ENCODE measurements at regions of chr4 and their contacts with region 1.

Region 1: GRCh38 chr4:15882675-15883086 is 55.9 kb downstream of the FGFBP1 start:
- DNase-seq: peak; percentile 16
- H3K4me3 ChIP-seq: no peak overlapping the region
- H3K27me3 ChIP-seq: peaks cover 4% of the 10 kb centered on the region; the same call in 1 of the 2 replicates
- CTCF ChIP-seq: peak; percentile 90

Region 2: DNA sequence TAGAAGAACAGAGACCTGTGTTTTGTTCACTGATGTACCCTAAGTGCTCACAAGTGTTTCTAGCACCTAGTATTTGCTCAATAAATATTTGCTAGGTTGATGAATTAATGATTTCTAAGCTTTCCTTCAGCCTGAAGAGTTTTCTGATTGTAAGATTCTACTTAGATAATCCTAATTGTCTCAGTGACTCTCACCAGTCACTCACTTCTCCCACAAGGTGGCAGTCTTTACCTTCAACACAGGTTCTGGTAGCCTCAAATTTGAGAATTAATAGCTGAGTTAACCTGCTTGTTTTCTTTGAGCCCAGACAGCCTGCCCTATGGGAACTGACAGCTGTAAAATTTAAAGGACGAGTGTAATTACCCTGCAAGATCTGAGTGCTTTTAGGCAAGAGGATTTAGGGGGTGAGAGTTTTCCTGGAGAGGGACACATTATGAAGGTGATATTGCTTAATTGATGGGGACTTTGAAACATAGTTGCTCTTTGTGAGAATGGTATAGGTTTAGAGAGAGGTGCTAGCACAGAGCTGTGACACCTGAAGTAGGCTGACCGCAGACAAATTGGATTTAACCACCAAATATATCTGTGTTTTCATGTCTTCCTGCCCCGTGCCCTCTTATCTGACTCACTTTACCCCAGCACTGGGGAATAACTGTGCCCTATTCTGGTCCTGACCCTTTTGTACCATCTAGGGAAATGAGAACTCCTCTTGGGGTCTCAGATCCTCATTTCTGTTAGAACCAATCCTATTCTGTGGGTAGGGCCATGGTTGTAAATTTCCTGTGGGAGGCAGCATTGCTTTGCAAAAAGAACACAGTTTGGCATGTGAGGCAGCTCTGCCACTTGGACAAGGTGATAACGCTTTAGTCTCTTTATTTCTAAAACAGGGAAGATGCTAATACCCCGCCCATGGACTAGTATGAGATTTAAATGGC is 76.8 kb before region 1 on chr4:
- CTCF ChIA-PET with region 1: interaction called, 38 read pairs
- POLR2A ChIA-PET with region 1: no interaction called
- DNase-seq: no peak
- H3K4me3 ChIP-seq: no peak overlapping the region
- H3K27me3 ChIP-seq: peaks cover 3% of the 10 kb centered on the region; the same call in 1 of the 2 replicates
- CTCF ChIP-seq: peak; percentile 71

Region 3: DNA sequence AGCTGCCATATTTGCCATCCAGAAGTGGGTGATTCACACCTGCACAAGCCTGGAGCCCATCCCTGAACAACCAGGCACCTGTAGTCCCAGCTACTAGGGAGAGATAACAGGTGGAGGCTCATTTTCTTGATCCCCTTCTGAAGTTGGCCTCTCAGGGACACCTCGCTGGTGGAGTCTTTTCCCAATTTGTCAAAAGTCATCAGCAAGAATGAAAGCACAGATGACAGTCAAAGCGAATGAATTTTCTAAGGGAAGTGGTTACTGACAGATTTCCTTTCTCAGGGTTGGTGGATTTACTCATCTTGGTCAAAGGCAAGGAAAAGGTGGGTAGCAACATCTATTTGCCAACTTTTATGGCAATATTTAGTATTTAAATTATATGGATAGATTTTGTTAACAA is 19.3 kb after region 1 on chr4:
- CTCF ChIA-PET with region 1: interaction called, 10 read pairs
- POLR2A ChIA-PET with region 1: no interaction called
- DNase-seq: no peak
- H3K4me3 ChIP-seq: no peak overlapping the region
- H3K27me3 ChIP-seq: peaks cover 27% of the 10 kb centered on the region
- CTCF ChIP-seq: no peak

Region 4: GRCh38 chr4:15938182-15938581 is 55.5 kb after region 1 on chr4:
- CTCF ChIA-PET with region 1: interaction called, 16 read pairs
- POLR2A ChIA-PET with region 1: no interaction called
- DNase-seq: no peak
- H3K4me3 ChIP-seq: no peak overlapping the region
- H3K27me3 ChIP-seq: peaks cover 12% of the 10 kb centered on the region
- CTCF ChIP-seq: no peak

Region 5: GRCh38 chr4:15963001-15963451 is 80.3 kb after region 1 on chr4 and contains the start of gene FGFBP2:
- CTCF ChIA-PET with region 1: interaction called, 38 read pairs
- POLR2A ChIA-PET with region 1: no interaction called
- DNase-seq: no peak
- H3K4me3 ChIP-seq: no peak within 1 kb of the TSS
- H3K27me3 ChIP-seq: peaks cover 6% of the 10 kb centered on the region
- CTCF ChIP-seq: peak; percentile 58
- polyA plus RNA-seq, gene FGFBP2: not detected in 2 replicates

Region 6: GRCh38 chr4:16006791-16007446 is 124.2 kb after region 1 on chr4:
- CTCF ChIA-PET with region 1: interaction called, 34 read pairs
- POLR2A ChIA-PET with region 1: no interaction called
- DNase-seq: no peak
- H3K4me3 ChIP-seq: no peak overlapping the region
- H3K27me3 ChIP-seq: peaks cover 2% of the 10 kb centered on the region
- CTCF ChIP-seq: no peak

Measured in BJ (cell line).